IMR-90 (cell line): ENCODE measurements at regions of chr5 and their contacts with region 1.

Region 1: DNA sequence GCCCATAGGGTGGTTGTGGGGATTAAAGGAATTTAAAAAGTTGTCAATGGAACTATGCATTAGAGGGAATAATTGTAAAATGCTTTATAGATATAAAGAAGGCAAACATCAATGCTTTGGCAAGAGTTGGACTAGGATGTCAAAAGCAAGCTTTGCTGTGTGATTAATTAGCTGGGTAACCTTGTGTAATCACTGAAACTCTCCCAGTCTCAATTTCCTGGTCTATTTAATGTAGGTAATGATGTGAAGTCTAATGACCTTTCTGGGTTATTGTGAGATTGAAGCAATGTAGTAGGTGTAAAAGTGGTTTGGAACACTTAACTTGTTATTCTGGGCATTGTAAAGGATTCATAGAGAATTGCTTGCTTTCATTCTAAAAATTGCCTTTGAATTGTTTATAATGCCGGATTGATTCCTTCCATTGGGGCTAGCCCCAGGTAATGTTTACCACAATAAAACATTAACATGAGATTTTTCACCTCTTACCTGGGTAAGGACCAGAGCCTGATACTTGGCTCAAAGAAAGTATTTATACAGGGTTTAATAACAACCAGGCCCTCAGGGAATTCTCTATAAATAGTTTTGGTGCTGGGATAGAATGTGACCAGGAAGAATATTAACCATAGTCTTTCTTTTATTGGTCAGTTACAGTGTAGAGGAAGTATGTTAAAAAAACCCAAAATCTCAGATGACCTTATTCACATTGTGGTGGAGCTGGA is 30.0 kb upstream of the CLINT1 start:
- DNase-seq: no peak
- ATAC-seq: no peak
- H3K4me3 ChIP-seq: no peak overlapping the region
- H3K27ac ChIP-seq: no peak overlapping the region
- H3K4me1 ChIP-seq: no peaks in the 10 kb centered on the region
- H3K27me3 ChIP-seq: 0 out of 2 replicates have a peak, but pooled peaks cover 1% of the 10 kb centered on the region
- CTCF ChIP-seq: no peak
- POLR2A ChIP-seq: no peak
- RAD21 ChIP-seq: no peak

Region 2: GRCh38 chr5:157640406-157641066 is 248.4 kb before region 1 on chr5:
- CTCF ChIA-PET with region 1: no interaction called
- POLR2A ChIA-PET with region 1: no interaction called
- dilution Hi-C with region 1: no loop called
- in situ Hi-C with region 1: no loop called
- intact Hi-C with region 1: no loop called
- DNase-seq: no peak
- ATAC-seq: no peak
- H3K4me3 ChIP-seq: no peak overlapping the region
- H3K27ac ChIP-seq: no peak overlapping the region
- H3K4me1 ChIP-seq: no peaks in the 10 kb centered on the region
- H3K27me3 ChIP-seq: no peaks in the 10 kb centered on the region
- CTCF ChIP-seq: no peak
- POLR2A ChIP-seq: no peak
- RAD21 ChIP-seq: no peak

Region 3: DNA sequence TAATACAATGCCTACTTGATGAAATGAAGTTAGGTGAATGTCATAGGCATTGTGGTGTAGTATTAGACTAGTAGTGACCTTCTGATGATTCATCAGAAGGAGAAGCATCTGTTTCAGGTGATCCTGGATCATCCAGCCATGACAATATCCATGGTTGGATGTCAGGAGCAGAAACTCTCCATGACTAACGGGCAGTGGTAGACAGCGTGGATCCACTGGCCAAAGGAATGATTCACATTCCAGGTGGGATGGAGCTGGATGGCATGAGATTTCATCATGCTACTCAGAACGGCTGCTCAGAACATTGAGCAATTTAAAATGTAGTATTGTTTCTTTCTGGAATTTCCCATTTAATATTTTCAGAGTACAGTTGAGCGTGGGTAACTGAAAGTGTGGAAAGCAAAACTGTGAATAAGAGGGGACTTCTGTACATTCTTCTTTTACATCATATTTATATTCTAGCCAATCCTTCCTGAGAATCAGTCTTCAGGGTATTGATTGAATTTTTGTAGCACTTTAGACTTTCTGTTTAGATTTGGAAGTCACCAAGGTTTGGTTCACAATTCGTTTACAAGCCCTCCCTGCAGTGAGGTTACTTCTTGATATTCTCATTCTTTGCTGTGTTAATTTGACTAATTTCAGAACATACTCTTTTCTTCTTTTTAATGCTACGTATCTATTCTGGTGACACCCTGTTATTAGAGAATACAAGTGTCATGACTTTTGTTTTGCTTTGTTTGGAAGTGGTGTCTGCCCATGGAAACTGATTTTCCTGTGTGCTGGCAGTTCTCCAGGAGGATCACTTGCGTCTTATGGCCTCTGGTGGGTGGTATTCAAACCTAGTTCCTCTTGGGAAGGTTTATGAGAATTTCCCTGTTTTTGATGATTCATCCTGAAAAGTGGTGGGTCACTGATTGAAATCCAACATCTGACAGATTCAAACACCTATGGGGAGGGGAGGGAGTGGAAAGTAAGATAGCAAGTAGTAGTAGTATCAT is 17.8 kb before region 1 on chr5:
- CTCF ChIA-PET with region 1: no interaction called
- POLR2A ChIA-PET with region 1: interaction called, 17 read pairs
- dilution Hi-C with region 1: no loop called
- in situ Hi-C with region 1: no loop called
- intact Hi-C with region 1: no loop called
- DNase-seq: peak; percentile 54
- ATAC-seq: peak; percentile 8; the same call in 1 of the 2 replicates
- H3K4me3 ChIP-seq: no peak overlapping the region
- H3K27ac ChIP-seq: no peak overlapping the region
- H3K4me1 ChIP-seq: peaks cover 8% of the 10 kb centered on the region
- H3K27me3 ChIP-seq: no peaks in the 10 kb centered on the region
- CTCF ChIP-seq: 0 out of 2 replicates have a peak, but pooled peaks have one; percentile 15
- POLR2A ChIP-seq: no peak
- RAD21 ChIP-seq: no peak